Uterus (tissue), 4 donors: ENCODE measurements at regions of chr15 and their contacts with region 1.

Region 1: DNA sequence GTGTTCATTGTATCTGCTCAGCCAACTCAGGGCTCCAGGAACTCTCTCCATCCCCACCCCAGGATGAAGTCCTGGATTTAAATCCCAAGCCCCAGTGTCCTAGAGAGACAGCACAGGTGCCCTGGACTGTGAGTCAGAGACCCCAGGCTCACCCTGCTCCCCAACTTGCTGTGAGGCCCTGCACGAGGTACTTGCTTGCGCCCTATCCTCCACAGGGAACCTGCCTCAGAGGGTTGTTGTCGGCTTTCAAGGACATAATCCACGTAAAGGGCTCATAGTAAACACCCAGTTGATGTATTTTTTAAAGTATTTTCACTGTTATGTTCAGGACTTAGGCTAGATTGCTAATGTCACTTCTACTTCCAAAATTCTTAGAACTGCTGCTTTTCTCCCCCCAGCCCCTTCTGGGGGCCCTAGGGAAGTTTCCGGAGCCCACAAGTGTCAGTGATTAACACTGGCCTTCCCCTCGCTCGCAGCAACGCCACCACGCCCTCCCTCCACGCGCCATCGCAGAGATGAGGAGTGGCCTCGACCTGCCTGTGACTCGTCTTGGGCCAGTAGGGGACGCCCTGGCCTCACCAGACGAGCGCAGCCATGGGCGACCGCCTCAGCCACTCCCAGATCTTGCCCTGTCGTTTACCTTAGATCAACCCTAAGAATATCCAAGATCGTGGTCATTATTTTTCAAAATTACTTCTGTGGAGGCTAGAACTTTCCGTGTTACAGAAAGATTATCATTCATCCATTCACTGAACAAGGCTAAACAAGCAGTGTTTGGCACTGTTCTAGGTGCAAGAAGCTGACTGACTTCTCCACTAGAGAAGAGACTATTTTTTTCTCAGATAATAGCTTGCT is 6.0 kb upstream of the SRP14 start:
- DNase-seq: peak; percentile 87 to 88
- H3K4me3 ChIP-seq: no peak overlapping the region
- H3K27ac ChIP-seq: peak overlapping the region; percentile 55 to 71
- H3K4me1 ChIP-seq: peaks cover 6 to 11% of the 10 kb centered on the region in 2 donors
- H3K27me3 ChIP-seq: no peaks in the 10 kb centered on the region
- CTCF ChIP-seq: peak; percentile 94 to 97 (median 97)
- POLR2A ChIP-seq: no peak

Region 2: GRCh38 chr15:38991126-38991525 is 1053.8 kb before region 1 on chr15:
- intact Hi-C with region 1: no loop called
- DNase-seq: no peak
- H3K4me3 ChIP-seq: no peak overlapping the region
- H3K27ac ChIP-seq: no peak overlapping the region
- H3K4me1 ChIP-seq: no peaks in the 10 kb centered on the region
- H3K27me3 ChIP-seq: no peaks in the 10 kb centered on the region
- CTCF ChIP-seq: peak in 3 of 4 experiments; percentile 22 to 32 (median 29)
- POLR2A ChIP-seq: no peak

Region 3: DNA sequence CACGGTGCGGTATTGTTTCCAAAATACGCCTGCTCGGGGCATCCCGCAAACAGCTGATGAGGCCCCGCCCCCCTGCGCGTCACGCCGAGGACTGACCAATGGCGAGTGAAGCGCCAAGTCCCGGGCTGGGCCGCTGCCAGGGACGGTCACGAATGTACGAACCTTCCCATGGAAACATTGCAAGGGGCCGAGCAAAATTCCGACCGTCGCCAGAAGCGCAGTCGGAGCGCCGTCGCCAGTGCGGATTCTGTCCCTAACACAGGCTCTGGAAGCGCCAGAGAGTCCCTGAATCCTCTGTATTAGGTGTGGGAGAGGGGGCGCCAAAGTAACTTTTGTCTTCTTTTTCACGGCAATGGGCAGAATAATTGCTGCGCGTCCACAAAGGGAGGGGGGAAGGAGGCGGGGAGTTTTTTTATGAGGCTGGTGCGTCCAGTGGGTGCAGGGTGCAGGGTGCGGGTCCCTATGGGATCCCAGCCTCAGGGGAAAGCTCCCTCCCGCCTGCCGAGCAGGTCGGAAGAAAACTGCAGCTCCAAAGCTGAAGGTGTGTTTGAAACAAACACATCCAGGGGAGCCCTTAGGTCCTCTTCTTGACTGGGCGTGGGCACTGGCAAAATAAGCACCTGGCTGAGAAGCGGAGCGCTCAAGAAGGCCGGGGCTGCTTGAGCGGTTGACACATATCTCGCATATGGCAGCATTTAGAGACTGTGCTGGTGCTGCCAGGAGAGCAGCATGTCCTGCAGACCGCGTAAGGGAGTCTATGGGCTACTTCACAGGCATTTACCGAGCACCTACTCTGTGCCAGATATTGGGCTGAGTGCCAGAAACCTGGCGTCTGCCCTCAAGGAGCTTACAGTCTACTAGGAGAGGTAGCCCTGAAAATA is 64.2 kb after region 1 on chr15 and contains the start of gene BMF:
- intact Hi-C with region 1: loop called (anchors 2 kb)
- DNase-seq: peak; percentile 100
- H3K4me3 ChIP-seq: peak within 1 kb of the TSS; percentile 63 to 79
- H3K27ac ChIP-seq: peak within 1 kb of the TSS; percentile 95
- H3K4me1 ChIP-seq: peaks cover 11 to 31% of the 10 kb centered on the region in 2 donors
- H3K27me3 ChIP-seq: no peaks in the 10 kb centered on the region
- CTCF ChIP-seq: peak; percentile 26 to 56 (median 43)
- POLR2A ChIP-seq: peak in 1 of 2 donors; percentile 96
- total RNA-seq, gene BMF: 7.1 to 46.2 (median 22.6) TPM